Activated CD4-positive, alpha-beta memory T cell treated with anti-CD3 and anti-CD28 coated beads for 36 hours (primary cell): ENCODE measurements at regions of chr1 and their contacts with region 1.

Region 1: GRCh38 chr1:54355931-54356679 is 50.1 kb downstream of the SSBP3 start:
- DNase-seq: peak; percentile 15
- H3K4me3 Mint-ChIP-seq: peak overlapping the region; percentile 65
- H3K27ac Mint-ChIP-seq: peak overlapping the region; percentile 70
- H3K4me1 Mint-ChIP-seq: peaks cover 71% of the 10 kb centered on the region
- H3K27me3 Mint-ChIP-seq: no peaks in the 10 kb centered on the region

Region 2: GRCh38 chr1:54287176-54287650 is 68.9 kb before region 1 on chr1:
- CTCF ChIA-PET with region 1: no interaction called
- POLR2A ChIA-PET with region 1: no interaction called
- intact Hi-C with region 1: loop called (anchors 5 kb)
- DNase-seq: peak; percentile 87
- H3K4me3 Mint-ChIP-seq: peak overlapping the region; percentile 3
- H3K27ac Mint-ChIP-seq: peak overlapping the region; percentile 85
- H3K4me1 Mint-ChIP-seq: peaks cover 81% of the 10 kb centered on the region
- H3K27me3 Mint-ChIP-seq: no peaks in the 10 kb centered on the region

Region 3: GRCh38 chr1:54376430-54377039 is 20.4 kb after region 1 on chr1:
- CTCF ChIA-PET with region 1: no interaction called
- POLR2A ChIA-PET with region 1: no interaction called
- intact Hi-C with region 1: loop called (anchors 2 kb)
- DNase-seq: peak; percentile 59
- H3K4me3 Mint-ChIP-seq: no peak overlapping the region
- H3K27ac Mint-ChIP-seq: no peak overlapping the region
- H3K4me1 Mint-ChIP-seq: peaks cover 50% of the 10 kb centered on the region
- H3K27me3 Mint-ChIP-seq: no peaks in the 10 kb centered on the region

Region 4: DNA sequence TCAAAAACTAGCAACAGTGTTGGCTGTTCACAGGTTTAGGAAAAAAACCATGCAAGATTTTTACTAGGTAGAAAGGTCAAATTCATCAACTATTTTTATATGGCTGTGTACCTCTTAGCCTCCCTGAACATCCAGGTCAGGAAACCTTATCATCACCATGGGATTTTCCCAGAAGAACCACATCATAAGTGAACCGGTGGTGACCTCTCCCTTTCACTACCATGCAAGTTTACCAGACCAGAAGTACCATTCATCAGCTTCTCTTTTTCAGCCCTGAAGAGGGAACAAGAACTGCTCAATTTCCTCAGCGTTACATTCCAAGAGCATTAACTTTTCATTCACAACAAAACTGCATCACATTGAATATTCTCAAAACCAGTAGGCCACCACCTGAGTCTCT is 44.2 kb after region 1 on chr1:
- CTCF ChIA-PET with region 1: interaction called, 3 read pairs
- POLR2A ChIA-PET with region 1: no interaction called
- intact Hi-C with region 1: loop called (anchors 1 kb)
- DNase-seq: peak; percentile 68
- H3K4me3 Mint-ChIP-seq: peak overlapping the region; percentile 30
- H3K27ac Mint-ChIP-seq: peak overlapping the region; percentile 67
- H3K4me1 Mint-ChIP-seq: peaks cover 69% of the 10 kb centered on the region
- H3K27me3 Mint-ChIP-seq: no peaks in the 10 kb centered on the region

Region 5: GRCh38 chr1:54944610-54945544 is 588.8 kb after region 1 on chr1:
- CTCF ChIA-PET with region 1: no interaction called
- POLR2A ChIA-PET with region 1: no interaction called
- intact Hi-C with region 1: no loop called
- DNase-seq: peak; percentile 79
- H3K4me3 Mint-ChIP-seq: no peak overlapping the region
- H3K27ac Mint-ChIP-seq: no peak overlapping the region
- H3K4me1 Mint-ChIP-seq: peaks cover 4% of the 10 kb centered on the region
- H3K27me3 Mint-ChIP-seq: no peaks in the 10 kb centered on the region